ENCODE measurements at regions of chr17 and their contacts with region 1.

Region 1: DNA sequence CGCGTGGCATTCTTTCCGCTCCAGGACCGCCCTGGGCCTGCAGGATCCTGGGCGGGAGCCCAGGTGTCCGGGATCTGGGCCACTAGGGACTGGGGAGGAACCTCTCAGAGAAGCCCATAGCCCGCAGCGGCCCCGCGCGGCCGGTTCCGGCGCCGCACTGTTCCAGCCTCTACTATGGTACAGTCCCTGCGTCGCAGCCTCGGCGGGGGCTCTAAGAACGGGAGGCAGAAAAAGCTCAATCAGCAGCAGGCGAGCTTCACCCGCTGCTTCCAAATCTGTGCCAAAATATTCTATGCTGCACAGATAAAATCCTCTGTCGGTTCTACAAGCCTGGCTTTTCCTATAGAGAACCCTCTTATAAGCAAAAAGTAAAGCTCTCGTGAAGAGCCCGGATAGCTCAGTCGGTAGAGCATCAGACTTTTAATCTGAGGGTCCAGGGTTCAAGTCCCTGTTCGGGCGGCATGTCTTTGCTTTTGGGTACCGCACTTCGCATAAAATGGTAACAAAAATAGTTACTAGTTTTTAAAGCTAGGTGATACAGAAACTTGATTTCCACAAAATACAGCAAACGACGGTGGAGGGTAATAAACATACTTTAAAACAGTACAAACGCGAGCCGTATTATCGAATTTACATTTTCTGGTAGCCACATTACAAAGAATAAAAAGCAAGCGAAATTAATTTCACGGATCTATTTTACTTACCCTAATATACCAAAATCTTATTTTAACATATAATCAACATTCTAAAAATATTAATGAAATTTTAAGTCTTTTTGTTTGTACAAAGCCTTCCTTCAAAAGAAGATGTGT is 661 bp upstream of the ALOXE3 start:
- H3K4me3 Mint-ChIP-seq: peak overlapping the region; percentile 78
- H3K27ac Mint-ChIP-seq: peak overlapping the region; percentile 13
- H3K4me1 Mint-ChIP-seq: peaks cover 51% of the 10 kb centered on the region
- H3K27me3 Mint-ChIP-seq: peaks cover 83% of the 10 kb centered on the region

Region 2: DNA sequence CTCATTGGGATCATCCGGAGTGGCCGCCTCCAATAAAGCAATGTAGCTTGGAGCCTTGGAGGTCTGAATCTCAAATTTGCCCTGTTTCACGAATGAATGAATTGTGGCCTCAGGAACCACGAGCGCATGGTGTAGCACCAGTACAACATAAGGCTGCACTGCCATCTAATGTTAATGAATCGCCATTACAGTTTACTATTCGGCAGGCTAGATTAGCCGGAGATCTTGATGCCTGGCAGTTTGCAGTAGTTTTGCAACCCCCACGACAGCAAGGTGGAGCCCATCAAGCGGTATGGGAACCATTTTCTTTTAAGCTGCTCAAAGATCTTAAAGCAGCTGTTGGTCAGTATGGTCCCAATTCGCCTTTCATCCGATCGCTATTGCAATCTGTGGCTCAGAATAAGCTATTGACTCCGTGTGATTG is 61.3 kb before region 1 on chr17:
- intact Hi-C with region 1: loop called (anchors 5 kb)
- H3K4me3 Mint-ChIP-seq: no peak overlapping the region
- H3K27ac Mint-ChIP-seq: no peak overlapping the region
- H3K4me1 Mint-ChIP-seq: peaks cover 40% of the 10 kb centered on the region
- H3K27me3 Mint-ChIP-seq: peaks cover 28% of the 10 kb centered on the region

Region 3: DNA sequence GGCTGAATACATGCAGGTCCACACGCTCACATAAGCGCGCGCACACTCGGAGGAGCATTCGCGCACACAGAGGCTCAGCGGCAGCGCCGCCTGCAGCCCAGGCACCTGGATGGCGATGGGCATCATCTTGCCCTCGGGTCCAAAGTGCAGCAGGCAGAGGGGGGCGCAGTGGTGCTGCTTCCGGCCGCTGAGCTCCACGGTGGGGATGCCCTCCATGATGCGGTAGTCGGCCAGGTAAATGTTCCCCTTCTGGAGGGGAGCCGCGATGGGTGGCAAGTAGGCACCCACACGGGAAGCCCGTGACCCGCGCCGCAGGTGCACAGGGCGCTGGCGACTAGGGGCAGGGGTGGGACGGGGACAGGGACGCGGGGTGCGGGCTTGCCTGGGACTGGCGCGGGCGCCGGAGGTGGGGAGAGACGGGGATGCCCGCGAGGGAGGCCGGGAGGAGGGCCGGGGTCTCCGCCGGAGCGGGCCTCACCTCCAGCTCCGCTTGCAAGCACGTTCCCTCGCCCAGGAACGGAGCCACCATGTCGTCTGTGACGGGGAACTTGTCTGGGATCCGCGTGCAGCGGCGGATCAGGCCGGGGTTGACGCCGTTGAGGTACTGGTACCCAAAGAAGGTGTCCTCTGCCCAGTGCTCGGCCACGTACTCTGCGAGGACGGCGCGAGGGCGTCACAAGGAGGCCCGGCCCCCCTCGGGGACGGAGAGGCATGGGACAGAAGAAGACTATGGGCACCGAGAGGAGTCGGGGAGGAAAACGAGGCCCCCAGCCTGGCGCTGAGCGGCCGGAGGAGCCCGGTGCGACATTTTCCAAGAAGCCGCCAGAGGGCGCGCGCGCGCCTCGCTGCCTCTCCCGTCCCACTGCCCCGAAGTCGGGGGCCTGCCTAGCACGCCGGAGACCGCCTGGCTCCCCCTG is 39.4 kb before region 1 on chr17:
- intact Hi-C with region 1: loop called (anchors 5 kb)
- H3K4me3 Mint-ChIP-seq: peak overlapping the region; percentile 72
- H3K27ac Mint-ChIP-seq: no peak overlapping the region
- H3K4me1 Mint-ChIP-seq: peaks cover 22% of the 10 kb centered on the region
- H3K27me3 Mint-ChIP-seq: peaks cover 75% of the 10 kb centered on the region

Region 4: DNA sequence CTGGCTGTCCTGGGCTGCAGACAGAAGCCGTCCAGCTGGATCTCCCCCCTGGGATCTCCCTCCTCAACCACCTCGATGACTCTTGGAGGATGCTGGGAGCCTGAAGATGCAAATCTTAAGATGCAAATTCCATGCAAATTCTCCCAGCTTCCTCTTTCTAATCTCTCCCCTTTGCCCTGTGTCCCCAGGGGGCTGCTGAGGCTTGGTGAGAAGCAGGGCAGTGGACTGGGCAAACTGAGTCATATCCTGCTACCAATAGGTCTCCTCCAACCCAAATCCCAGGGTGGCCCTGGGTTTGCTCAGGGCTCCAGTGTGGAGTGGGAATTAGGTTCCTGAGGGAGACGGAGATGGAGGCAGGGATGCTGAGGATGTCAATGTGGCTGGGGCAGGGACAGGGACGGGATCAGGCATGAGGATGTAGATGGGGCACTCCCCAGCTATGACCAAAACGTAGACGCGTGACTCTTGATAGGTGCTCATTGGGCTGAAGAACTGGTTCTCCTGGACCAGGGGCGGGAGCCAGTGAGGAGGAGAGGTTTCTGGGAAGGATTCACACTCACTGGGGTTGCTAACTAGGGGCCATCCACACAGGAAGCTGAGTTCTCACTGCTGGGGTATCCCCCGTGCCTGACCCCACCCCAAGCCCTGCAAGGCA is 27.8 kb before region 1 on chr17:
- intact Hi-C with region 1: loop called (anchors 1 kb)
- H3K4me3 Mint-ChIP-seq: no peak overlapping the region
- H3K27ac Mint-ChIP-seq: no peak overlapping the region
- H3K4me1 Mint-ChIP-seq: peaks cover 23% of the 10 kb centered on the region
- H3K27me3 Mint-ChIP-seq: peaks cover 77% of the 10 kb centered on the region

Region 5: GRCh38 chr17:8138672-8139371 is 19.8 kb after region 1 on chr17:
- intact Hi-C with region 1: loop called (anchors 2 kb)
- H3K4me3 Mint-ChIP-seq: no peak overlapping the region
- H3K27ac Mint-ChIP-seq: no peak overlapping the region
- H3K4me1 Mint-ChIP-seq: no peaks in the 10 kb centered on the region
- H3K27me3 Mint-ChIP-seq: peaks cover 14% of the 10 kb centered on the region

Region 6: GRCh38 chr17:8156246-8156992 is 37.4 kb after region 1 on chr17:
- intact Hi-C with region 1: loop called (anchors 5 kb)
- H3K4me3 Mint-ChIP-seq: no peak overlapping the region
- H3K27ac Mint-ChIP-seq: no peak overlapping the region
- H3K4me1 Mint-ChIP-seq: peaks cover 32% of the 10 kb centered on the region
- H3K27me3 Mint-ChIP-seq: no peaks in the 10 kb centered on the region

Region 7: DNA sequence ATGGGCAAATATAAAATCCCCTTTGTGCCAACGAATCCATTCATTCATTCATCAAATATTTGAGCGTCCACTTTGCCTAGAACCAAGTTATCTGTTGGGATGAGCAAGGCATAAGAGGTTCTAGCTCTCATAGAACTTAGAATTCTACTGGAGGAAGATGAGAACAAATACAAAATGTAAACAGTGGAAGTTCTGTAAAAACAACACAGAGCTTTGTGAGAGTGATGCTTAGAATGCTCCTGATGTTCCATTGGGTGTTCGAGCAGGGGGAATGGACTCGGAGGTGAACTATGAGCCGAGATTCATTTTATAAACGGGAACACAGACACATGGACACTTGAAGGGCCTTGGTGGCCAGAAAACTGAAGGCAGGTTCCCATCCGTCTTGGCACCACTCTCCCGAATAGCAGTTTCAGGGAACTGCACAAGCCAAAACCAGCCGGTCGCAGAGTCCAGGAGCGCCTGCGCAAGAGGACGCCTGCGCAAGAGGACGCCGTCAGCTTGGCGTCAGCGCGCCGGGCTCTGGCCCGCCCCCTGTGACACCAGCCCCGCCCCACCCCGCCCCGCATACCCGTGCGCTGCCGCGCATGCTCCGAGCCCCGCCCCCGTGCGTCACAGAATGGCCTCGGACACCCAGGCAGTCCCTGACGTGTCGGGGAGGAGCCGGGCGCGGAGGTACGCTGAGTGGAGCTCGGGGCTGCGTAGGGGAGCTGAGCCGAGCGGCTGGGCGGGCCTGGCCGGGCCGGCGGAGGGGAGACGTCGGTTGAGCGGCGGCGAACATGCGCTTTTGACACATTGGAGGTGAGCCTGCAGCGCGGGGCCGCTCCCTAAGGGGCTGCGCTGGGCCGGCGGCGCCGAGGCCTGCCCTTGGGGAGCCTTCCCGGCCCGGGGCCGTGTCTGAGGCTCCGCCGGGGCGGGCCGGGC is 316.5 kb after region 1 on chr17 and contains the start of gene NDEL1:
- intact Hi-C with region 1: no loop called
- H3K4me3 Mint-ChIP-seq: peak within 1 kb of the TSS; percentile 93
- H3K27ac Mint-ChIP-seq: peak within 1 kb of the TSS; percentile 94
- H3K4me1 Mint-ChIP-seq: peaks cover 14% of the 10 kb centered on the region
- H3K27me3 Mint-ChIP-seq: no peaks in the 10 kb centered on the region

Measured in dendritic cell treated with granulocyte-macrophage colony-stimulating factor and Interleukin-4, amounts not matched to agents 40 ng/mL and 50 ng/mL, for 4 days (primary cell).